Activated naive CD4-positive, alpha-beta T cell treated with anti-CD3 and anti-CD28 coated beads for 36 hours (primary cell): ENCODE measurements at regions of chr3 and their contacts with region 1.

Region 1: DNA sequence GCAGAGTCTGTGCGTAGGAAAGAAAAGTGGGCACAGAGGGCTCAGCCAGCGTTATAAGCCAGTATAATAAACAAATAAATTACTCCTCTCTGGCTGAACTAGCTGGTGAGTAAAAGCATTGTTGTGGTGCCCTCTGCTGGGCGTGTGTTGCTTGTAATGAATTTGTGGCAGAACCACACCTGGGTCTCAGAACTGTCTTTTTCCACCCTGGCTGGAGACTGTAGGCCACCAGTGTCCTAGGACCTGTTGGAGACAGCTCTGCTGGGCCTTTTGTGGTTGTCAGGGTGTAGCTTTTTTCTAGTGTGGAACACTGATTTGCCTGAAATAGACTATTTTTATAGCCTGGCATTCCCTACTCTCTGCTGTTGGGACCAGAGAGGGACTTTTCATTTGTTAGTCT is 130.5 kb upstream of the EIF1B start:
- DNase-seq: peak; percentile 82
- H3K4me3 Mint-ChIP-seq: no peak overlapping the region
- H3K27ac Mint-ChIP-seq: no peak overlapping the region
- H3K4me1 Mint-ChIP-seq: no peaks in the 10 kb centered on the region
- H3K27me3 Mint-ChIP-seq: no peaks in the 10 kb centered on the region

Region 2: GRCh38 chr3:39447637-39448483 is 731.2 kb before region 1 on chr3:
- CTCF ChIA-PET with region 1: interaction called, 4 read pairs
- intact Hi-C with region 1: loop called (anchors 1 kb)
- DNase-seq: peak; percentile 78
- H3K4me3 Mint-ChIP-seq: no peak overlapping the region
- H3K27ac Mint-ChIP-seq: no peak overlapping the region
- H3K4me1 Mint-ChIP-seq: no peaks in the 10 kb centered on the region
- H3K27me3 Mint-ChIP-seq: no peaks in the 10 kb centered on the region

Region 3: GRCh38 chr3:39707314-39707909 is 471.6 kb before region 1 on chr3:
- CTCF ChIA-PET with region 1: interaction called, 3 read pairs
- intact Hi-C with region 1: loop called (anchors 1 kb)
- DNase-seq: no peak
- H3K4me3 Mint-ChIP-seq: no peak overlapping the region
- H3K27ac Mint-ChIP-seq: no peak overlapping the region
- H3K4me1 Mint-ChIP-seq: no peaks in the 10 kb centered on the region
- H3K27me3 Mint-ChIP-seq: peaks cover 3% of the 10 kb centered on the region

Region 4: DNA sequence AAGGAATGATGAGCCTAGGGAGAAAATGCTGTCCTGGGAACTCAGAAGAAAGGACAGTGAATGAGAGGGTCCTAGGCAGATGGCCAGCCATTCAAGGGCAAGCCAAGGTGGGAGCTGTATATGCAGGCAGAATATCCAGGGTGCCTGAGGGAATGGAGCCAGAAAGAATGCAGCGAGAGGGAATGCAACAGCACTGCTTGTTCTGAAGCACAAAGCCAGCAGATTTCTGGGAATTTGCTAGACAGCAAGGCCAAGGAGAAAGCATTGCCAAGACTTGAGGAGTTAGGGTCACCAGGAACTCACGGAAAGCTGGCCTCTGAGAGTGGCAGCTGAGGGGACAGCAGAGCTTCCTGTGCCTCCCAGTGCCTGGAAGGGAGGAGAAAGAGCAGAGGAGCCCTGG is 169.0 kb before region 1 on chr3:
- CTCF ChIA-PET with region 1: no interaction called
- intact Hi-C with region 1: loop called (anchors 10 kb)
- DNase-seq: no peak
- H3K4me3 Mint-ChIP-seq: no peak overlapping the region
- H3K27ac Mint-ChIP-seq: no peak overlapping the region
- H3K4me1 Mint-ChIP-seq: no peaks in the 10 kb centered on the region
- H3K27me3 Mint-ChIP-seq: peaks cover 3% of the 10 kb centered on the region

Region 5: GRCh38 chr3:40191850-40192448 is 12.9 kb after region 1 on chr3:
- CTCF ChIA-PET with region 1: interaction called, 10 read pairs
- intact Hi-C with region 1: no loop called
- DNase-seq: peak; percentile 73
- H3K4me3 Mint-ChIP-seq: no peak overlapping the region
- H3K27ac Mint-ChIP-seq: no peak overlapping the region
- H3K4me1 Mint-ChIP-seq: no peaks in the 10 kb centered on the region
- H3K27me3 Mint-ChIP-seq: no peaks in the 10 kb centered on the region

Region 6: GRCh38 chr3:40317061-40317855 is 138.2 kb after region 1 on chr3:
- CTCF ChIA-PET with region 1: interaction called, 28 read pairs
- intact Hi-C with region 1: no loop called
- DNase-seq: peak; percentile 55
- H3K4me3 Mint-ChIP-seq: no peak overlapping the region
- H3K27ac Mint-ChIP-seq: no peak overlapping the region
- H3K4me1 Mint-ChIP-seq: peaks cover 7% of the 10 kb centered on the region
- H3K27me3 Mint-ChIP-seq: no peaks in the 10 kb centered on the region

Region 7: GRCh38 chr3:40487172-40487571 is 308.2 kb after region 1 on chr3:
- CTCF ChIA-PET with region 1: no interaction called
- intact Hi-C with region 1: no loop called
- DNase-seq: no peak
- H3K4me3 Mint-ChIP-seq: no peak overlapping the region
- H3K27ac Mint-ChIP-seq: no peak overlapping the region
- H3K4me1 Mint-ChIP-seq: peaks cover 2% of the 10 kb centered on the region
- H3K27me3 Mint-ChIP-seq: no peaks in the 10 kb centered on the region

Region 8: DNA sequence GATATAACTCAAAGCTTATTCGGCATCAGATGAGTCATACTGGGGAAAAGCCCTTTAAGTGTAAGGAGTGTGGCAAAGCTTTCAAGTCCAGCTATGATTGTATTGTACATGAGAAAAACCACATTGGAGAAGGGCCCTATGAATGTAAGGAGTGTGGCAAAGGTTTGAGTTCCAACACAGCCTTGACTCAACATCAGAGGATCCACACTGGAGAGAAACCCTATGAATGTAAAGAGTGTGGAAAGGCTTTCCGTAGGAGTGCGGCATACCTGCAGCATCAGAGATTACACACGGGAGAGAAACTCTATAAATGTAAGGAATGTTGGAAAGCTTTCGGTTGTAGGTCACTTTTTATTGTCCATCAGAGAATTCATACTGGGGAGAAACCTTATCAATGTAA is 353.2 kb after region 1 on chr3:
- CTCF ChIA-PET with region 1: no interaction called
- intact Hi-C with region 1: no loop called
- DNase-seq: no peak
- H3K4me3 Mint-ChIP-seq: no peak overlapping the region
- H3K27ac Mint-ChIP-seq: no peak overlapping the region
- H3K4me1 Mint-ChIP-seq: no peaks in the 10 kb centered on the region
- H3K27me3 Mint-ChIP-seq: no peaks in the 10 kb centered on the region